ENCODE measurements at regions of chr7 and their contacts with region 1.

Region 1: DNA sequence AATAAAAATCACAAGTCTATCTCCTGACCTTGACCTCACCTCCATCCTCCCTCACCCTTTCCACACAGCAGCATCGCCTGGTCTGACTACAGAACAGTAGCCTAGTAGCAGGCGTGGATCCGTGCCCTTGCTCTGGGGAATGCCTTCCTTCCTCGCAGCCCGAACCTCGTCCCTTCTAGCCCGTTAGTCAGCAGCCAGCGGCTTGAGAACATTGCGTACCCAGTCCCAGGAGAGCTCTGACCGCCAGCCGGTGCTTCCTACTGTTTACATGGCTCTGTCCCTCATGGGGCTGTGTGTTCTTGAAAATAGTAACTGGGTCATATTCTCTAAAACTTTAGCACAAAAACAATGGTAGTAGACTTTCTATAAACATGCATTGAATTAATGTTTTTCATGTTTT is 682.7 kb upstream of the IGFBP3 start:
- DNase-seq: peak; percentile 98
- H3K4me3 ChIP-seq: peak overlapping the region in 1 of 4 donors; percentile 19
- H3K27ac ChIP-seq: peak overlapping the region; percentile 82 to 85 (median 84)
- H3K4me1 ChIP-seq: peaks cover 31 to 59% (median 40%) of the 10 kb centered on the region in 4 donors
- H3K27me3 ChIP-seq: no peaks in the 10 kb centered on the region
- CTCF ChIP-seq: no peak
- EP300 ChIP-seq: peak; percentile 97
- POLR2A ChIP-seq: no peak

Region 2: DNA sequence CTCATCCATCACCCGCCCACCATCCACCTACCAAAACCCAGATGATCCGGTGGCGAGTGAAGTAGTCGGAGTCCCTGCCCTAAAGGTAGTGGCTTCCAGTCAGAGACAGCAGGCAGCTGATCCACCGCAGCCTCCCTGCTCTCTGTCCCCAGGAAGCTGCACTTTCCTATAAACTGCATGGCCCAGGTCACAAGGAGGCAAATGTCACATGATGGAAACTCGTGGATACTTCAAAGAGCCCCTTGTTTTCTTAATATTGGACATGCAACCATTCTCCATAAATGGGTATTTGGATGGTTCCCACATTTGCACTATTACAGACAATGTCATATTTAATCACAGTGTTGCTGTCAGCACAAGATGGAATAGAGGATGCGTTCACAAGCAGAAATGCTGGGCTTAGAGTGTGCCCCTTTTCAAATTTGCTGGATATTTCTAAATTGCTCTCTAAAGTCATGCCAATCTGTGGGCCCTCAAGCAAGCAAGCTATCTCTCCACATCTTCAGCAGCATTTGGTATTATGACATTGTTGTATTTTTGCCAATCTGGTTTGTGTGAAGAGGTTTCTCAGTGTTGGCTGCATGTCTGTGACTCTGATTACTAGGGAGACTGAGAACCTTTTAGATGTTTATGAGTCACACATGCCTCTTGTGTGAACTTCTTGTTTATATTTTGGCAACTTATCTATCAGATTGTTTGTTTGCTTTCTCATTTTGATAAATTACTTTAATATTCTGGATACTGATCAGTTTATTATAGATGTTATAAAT is 156.1 kb after region 1 on chr7:
- intact Hi-C with region 1: loop called (anchors 5 kb)
- DNase-seq: no peak
- H3K4me3 ChIP-seq: no peak overlapping the region
- H3K27ac ChIP-seq: no peak overlapping the region
- H3K4me1 ChIP-seq: peaks cover 2 to 17% (median 11%) of the 10 kb centered on the region in 4 donors
- H3K27me3 ChIP-seq: no peaks in the 10 kb centered on the region
- CTCF ChIP-seq: no peak
- EP300 ChIP-seq: no peak
- POLR2A ChIP-seq: no peak